Panc1 (cell line): ENCODE measurements at regions of chr7 and their contacts with region 1.

Region 1: DNA sequence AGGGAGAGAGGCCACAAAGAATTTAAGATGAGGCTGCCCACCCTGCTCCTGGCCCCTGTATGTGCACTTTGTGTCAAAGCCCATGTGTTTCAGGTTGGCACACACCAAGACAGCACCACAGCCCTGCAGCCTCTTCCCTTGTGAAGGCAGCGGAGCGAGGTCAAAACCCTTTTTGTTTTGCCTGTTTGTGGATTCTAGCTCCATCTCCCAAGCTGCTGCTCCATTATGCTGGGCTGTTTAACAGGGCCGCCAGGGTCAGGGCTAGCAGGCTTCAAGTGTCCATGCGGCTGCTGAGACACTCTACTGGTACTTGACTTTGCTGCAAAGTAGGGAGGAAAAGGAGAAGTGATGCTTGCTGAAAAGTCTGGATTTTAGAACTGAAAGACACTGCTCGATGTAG is 142.3 kb upstream of the EFCAB10 start:
- DNase-seq: no peak
- ATAC-seq: no peak
- H3K4me3 ChIP-seq: no peak overlapping the region
- H3K27ac ChIP-seq: no peak overlapping the region
- H3K4me1 ChIP-seq: no peaks in the 10 kb centered on the region
- H3K27me3 ChIP-seq: no peaks in the 10 kb centered on the region
- CTCF ChIP-seq: no peak

Region 2: DNA sequence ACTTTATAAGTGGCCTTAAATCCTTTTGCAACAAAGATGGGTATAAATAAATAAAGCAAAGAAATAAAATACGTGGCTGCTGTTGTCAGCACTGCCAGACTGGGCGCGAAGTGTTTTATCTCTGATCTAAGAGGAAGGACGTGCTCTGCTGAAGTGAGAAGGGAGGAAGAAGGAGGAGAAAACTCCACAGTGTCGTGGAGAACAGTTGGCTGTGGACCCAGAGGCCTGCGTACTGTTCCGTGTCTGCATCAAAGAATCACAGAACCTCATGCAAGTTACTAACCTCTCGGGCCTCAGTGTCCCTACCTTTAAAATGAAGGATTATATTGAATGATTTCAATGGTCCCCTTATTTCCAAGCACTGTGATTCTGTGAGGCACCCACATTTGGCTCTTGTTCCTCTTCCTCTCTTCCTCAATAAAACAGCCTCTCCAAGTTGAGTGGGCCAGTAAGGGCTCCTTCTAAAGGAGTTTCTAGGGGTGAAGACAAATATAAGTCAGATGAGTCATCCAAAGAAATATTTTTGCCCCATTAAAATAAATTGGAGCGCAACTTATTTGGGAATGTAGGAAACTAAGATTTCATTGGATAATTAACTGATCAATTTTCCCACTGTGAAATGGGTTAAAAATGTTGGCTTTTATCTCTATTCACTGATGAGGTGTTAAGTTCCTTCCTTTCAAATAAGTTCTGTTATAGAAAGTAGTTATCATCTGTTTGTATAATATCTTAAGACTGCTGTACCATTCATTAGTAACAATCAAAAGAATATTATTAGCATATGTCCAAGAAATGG is 15.4 kb before region 1 on chr7:
- CTCF ChIA-PET with region 1: no interaction called
- POLR2A ChIA-PET with region 1: no interaction called
- in situ Hi-C with region 1: no loop called
- intact Hi-C with region 1: no loop called
- DNase-seq: no peak
- ATAC-seq: no peak
- H3K4me3 ChIP-seq: no peak overlapping the region
- H3K27ac ChIP-seq: no peak overlapping the region
- H3K4me1 ChIP-seq: no peaks in the 10 kb centered on the region
- H3K27me3 ChIP-seq: no peaks in the 10 kb centered on the region
- CTCF ChIP-seq: no peak

Region 3: DNA sequence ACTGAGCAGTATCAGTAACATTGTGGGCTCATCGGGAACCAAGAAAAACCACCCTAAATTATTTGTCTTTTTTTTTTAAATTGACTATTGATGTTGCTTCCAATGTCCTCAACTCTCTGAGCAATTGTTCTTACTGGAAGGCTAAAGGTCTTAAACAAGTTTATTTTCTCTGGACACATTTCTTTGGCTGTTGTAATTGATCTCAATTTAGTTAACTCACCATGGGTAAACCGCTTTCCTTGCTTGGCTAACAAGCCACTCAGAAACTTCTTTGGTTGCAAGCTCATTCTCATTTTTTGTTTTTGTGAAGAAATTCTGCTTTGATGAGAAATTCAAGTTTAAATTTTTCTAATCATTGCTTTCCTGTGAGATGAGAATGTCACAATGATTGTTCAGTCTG is 911.8 kb after region 1 on chr7:
- CTCF ChIA-PET with region 1: no interaction called
- POLR2A ChIA-PET with region 1: interaction called, 15 read pairs
- in situ Hi-C with region 1: no loop called
- intact Hi-C with region 1: no loop called
- DNase-seq: no peak
- ATAC-seq: no peak
- H3K4me3 ChIP-seq: no peak overlapping the region
- H3K27ac ChIP-seq: no peak overlapping the region
- H3K4me1 ChIP-seq: no peaks in the 10 kb centered on the region
- H3K27me3 ChIP-seq: peaks cover 3% of the 10 kb centered on the region
- CTCF ChIP-seq: no peak